Right cardiac atrium (tissue), 5 donors: ENCODE measurements at regions of chr22 and their contacts with region 1.

Region 1: DNA sequence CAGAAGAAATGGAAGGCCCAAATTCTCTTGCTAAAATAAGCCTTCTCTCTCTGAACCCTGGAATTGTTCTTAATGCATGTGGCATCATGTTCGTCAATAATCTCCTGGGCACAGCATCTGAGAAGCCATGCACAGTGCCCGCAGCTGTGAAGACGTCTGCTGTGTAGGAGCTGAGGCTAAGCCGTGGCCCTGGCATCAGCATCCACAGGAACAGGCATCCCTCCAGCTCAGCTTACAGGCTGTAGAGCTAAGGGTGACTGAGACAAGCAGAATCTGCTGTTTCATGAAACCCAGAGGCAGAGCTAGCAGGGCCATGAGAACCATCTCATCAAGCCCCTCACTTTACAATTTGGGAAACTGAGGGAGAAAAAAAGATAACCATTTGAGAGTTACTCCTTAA is 60.6 kb downstream of the SEZ6L start:
- DNase-seq: no peak
- ATAC-seq: no peak
- H3K4me3 ChIP-seq: no peak overlapping the region
- H3K27ac ChIP-seq: no peak overlapping the region
- H3K4me1 ChIP-seq: no peaks in the 10 kb centered on the region
- H3K27me3 ChIP-seq: no peaks in the 10 kb centered on the region

Region 2: DNA sequence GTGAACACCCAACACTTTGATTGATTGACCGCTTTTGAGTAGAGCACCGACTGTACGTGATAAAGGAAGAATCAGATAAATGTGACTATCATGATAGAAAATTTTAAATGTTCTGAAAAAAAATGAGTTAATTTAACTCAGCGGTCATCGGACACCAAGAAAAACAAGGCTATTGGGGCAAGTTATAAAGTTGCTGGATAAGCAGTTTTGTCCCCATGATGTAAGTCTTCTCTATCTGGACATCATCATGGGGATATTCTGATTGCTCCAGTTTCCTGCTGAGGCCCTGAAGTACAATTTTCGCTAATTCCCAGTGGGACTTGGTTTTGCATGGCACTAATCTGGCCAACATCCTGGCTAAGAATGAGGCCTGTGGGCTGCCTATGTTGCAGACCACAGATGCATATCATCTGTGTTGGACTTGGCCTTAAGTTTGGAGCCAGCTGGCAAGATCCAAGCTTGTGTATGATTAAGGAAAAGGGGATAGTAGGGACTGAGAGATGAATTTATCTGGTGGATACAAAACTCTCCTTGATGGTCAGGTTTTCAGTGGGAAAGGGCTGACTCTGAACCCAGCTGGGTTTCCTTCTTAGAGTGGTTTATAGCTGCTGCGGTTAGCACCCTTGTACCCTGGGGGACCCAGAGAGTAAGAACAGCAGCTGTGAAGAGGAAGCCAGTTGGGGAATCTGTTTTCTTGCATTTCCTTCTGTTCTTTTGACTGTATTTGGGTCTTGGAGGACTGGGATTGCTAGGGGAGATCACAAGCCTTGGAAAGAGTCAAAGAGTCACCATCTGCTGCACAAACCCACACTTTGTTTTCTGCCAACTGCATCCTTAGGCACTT is 57.7 kb after region 1 on chr22:
- intact Hi-C with region 1: loop called in 1 of 4 experiments (anchors 10 kb)
- DNase-seq: no peak
- ATAC-seq: no peak
- H3K4me3 ChIP-seq: no peak overlapping the region
- H3K27ac ChIP-seq: no peak overlapping the region
- H3K4me1 ChIP-seq: no peaks in the 10 kb centered on the region
- H3K27me3 ChIP-seq: no peaks in the 10 kb centered on the region

Region 3: DNA sequence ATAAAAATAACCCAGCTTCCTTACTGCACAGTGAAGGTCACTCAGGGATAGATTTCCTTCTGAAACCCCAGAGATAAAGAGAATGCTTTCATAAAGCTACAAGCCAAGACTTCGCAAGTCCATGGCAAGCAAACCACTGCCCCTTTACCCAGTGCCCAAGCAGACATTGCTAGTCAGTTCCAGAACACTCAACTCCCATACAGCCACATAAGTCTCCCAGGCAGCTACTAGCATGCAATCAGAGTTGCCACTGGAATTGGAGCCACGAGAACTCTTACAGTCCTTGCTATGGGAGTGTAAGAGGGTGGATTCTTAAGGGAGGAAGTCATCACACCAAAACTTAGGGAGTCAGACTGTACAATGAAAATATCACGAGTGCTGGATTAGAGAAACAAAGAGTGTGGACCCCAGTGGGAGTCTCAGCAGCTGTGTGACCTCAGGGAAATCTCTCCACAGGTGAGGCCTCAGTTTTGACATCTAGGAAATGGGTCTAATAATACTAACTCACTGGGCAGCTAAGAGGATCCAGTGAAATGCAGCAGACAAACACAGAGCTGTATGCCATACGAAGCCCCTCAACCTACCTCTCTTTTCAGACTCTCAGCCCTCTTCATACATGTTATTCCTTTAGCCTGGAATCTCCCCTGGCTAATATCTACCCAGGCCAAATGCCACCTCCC is 1045.0 kb after region 1 on chr22:
- intact Hi-C with region 1: no loop called
- DNase-seq: no peak
- ATAC-seq: no peak
- H3K4me3 ChIP-seq: no peak overlapping the region
- H3K27ac ChIP-seq: no peak overlapping the region
- H3K4me1 ChIP-seq: no peaks in the 10 kb centered on the region
- H3K27me3 ChIP-seq: no peaks in the 10 kb centered on the region